OCI-LY7 (cell line): ENCODE measurements at regions of chr13 and their contacts with region 1.

Region 1: DNA sequence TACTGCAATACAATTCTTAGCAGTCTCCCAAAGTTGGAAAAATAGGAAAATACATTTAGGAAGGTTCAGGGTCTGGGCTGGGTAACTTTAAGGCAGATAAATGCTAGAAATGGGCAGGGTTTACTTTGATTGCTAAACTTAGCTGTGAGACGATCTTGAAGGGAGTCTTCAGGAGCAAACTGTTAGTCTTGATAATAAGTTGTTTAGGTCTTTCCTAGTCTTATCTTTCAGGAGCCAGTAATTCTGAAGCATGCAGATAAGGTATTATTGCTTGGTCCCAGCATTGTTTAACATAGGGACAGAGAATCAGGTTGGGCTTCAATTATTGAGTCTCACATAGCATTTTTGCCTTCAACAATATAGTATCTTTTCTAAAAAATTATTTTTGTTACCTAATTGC is 262.4 kb upstream of the MIR17HG start:
- DNase-seq: no peak
- H3K4me3 ChIP-seq: no peak overlapping the region
- H3K27ac ChIP-seq: no peak overlapping the region
- H3K4me1 ChIP-seq: no peaks in the 10 kb centered on the region
- CTCF ChIP-seq: no peak

Region 2: GRCh38 chr13:90984756-90985155 is 100.4 kb before region 1 on chr13:
- CTCF ChIA-PET with region 1: no interaction called
- POLR2A ChIA-PET with region 1: no interaction called
- intact Hi-C with region 1: no loop called
- DNase-seq: no peak
- H3K4me3 ChIP-seq: no peak overlapping the region
- H3K27ac ChIP-seq: no peak overlapping the region
- H3K4me1 ChIP-seq: no peaks in the 10 kb centered on the region
- CTCF ChIP-seq: no peak

Region 3: DNA sequence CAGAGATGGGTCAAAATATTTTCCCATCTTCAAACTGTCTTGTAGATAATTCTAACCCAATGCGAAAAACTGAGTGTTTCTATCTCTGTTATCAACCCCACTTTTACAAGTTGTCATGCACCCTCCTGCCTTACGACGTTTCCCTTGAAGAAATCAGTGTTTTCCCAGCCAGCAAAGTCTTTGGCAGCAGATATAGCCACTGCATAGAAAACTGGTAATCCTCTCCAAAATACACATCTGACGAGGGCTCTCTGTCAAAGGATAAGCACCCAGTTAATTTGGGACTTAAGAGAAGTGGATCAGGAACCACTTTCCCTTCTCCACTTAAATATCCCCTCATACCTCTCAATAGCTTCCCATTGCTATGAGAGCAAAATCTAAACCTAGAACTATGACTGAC is 89.5 kb before region 1 on chr13:
- CTCF ChIA-PET with region 1: no interaction called
- POLR2A ChIA-PET with region 1: no interaction called
- intact Hi-C with region 1: no loop called
- DNase-seq: no peak
- H3K4me3 ChIP-seq: no peak overlapping the region
- H3K27ac ChIP-seq: no peak overlapping the region
- H3K4me1 ChIP-seq: no peaks in the 10 kb centered on the region
- CTCF ChIP-seq: no peak

Region 4: DNA sequence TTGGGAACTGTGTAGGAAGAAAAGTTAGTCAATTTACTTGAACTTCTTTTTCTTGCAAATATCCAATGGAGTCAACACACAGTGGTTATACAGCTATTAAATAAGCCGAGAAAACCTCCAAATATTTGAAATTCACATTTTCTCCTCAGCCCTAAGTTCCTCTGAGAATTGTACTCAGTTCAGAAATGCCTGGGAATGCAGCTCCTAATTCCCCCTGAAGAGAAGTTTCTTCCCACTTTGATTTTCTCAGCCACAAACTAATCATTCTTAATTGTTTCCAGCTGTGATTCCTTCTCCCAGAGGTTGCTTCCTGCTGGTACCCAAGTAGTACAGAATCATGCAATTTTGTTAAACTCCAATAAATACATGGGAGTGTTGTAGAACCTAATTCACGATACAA is 16.3 kb after region 1 on chr13:
- CTCF ChIA-PET with region 1: no interaction called
- POLR2A ChIA-PET with region 1: interaction called, 10 read pairs
- intact Hi-C with region 1: no loop called
- DNase-seq: no peak
- H3K4me3 ChIP-seq: no peak overlapping the region
- H3K27ac ChIP-seq: no peak overlapping the region
- H3K4me1 ChIP-seq: no peaks in the 10 kb centered on the region
- CTCF ChIP-seq: no peak